ENCODE measurements at regions of chr9 and their contacts with region 1.

Region 1: DNA sequence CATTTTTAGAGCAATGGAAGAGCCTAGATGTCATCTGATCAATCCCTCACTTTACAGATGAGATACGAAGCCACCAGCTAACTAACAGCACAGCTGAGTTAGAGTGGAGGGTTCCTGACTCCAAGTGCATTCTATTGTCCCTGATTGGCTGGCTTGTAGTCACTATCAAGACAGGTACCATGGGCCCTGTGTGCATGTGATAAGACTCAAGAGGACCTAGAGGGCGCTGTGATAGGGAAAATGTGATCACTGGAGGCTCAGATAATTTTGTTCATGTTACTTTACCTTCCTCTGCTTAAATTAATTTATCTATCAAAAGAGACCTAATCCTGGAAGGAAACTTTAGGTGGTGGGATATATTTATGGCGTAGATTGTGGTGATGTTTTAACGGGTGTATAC is 19.5 kb upstream of the SNAPC3 start:
- DNase-seq: no peak
- H3K4me3 ChIP-seq: no peak overlapping the region
- H3K27ac ChIP-seq: no peak overlapping the region
- H3K4me1 ChIP-seq: no peaks in the 10 kb centered on the region
- H3K27me3 ChIP-seq: no peaks in the 10 kb centered on the region
- CTCF ChIP-seq: peak; percentile 28

Region 2: DNA sequence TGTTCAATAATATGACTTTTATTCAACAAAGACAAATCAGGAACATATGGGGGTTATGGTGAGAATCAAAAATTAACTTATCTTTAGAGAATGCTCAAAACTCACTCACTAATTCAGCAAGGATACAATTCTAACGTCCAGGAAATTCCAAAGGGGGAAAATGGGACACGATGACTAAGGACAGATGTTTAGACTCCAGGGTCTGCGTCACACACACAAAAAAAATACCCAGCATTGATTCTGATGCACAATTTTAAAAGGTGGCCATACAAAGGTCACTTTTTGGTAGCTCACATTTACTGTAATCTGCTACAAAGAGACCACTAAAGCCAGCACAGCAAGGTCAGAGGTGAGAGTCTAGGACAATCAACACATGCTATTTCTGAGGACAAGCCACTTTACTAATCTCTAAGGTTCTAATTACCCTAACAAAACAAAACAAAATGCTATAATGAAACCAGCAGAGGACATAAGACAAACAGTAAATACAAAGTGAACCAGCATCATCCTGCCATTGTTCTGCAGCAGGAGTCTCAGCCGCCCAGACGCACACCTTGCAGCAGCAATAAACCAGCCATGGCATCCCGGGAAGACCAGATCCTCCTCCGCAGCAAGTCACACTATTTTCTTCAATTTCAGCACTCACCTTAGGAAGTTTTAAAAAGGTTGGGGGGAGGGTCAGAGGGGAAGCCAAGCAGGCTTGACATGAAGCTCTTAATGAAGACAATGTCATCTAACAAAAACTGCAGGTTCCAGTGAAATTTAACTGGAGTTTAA is 153.9 kb before region 1 on chr9:
- intact Hi-C with region 1: no loop called
- DNase-seq: no peak
- H3K4me3 ChIP-seq: no peak overlapping the region
- H3K27ac ChIP-seq: no peak overlapping the region
- H3K4me1 ChIP-seq: no peaks in the 10 kb centered on the region
- H3K27me3 ChIP-seq: no peaks in the 10 kb centered on the region
- CTCF ChIP-seq: no peak

Region 3: GRCh38 chr9:15333376-15333881 is 69.7 kb before region 1 on chr9:
- intact Hi-C with region 1: loop called (anchors 10 kb)
- DNase-seq: peak; percentile 50
- H3K4me3 ChIP-seq: no peak overlapping the region
- H3K27ac ChIP-seq: peak overlapping the region; percentile 75
- H3K4me1 ChIP-seq: peaks cover 4% of the 10 kb centered on the region
- H3K27me3 ChIP-seq: no peaks in the 10 kb centered on the region
- CTCF ChIP-seq: no peak

Measured in colonic mucosa (tissue), 4 donors.